B cell (primary cell): ENCODE measurements at regions of chr17 and their contacts with region 1.

Region 1: DNA sequence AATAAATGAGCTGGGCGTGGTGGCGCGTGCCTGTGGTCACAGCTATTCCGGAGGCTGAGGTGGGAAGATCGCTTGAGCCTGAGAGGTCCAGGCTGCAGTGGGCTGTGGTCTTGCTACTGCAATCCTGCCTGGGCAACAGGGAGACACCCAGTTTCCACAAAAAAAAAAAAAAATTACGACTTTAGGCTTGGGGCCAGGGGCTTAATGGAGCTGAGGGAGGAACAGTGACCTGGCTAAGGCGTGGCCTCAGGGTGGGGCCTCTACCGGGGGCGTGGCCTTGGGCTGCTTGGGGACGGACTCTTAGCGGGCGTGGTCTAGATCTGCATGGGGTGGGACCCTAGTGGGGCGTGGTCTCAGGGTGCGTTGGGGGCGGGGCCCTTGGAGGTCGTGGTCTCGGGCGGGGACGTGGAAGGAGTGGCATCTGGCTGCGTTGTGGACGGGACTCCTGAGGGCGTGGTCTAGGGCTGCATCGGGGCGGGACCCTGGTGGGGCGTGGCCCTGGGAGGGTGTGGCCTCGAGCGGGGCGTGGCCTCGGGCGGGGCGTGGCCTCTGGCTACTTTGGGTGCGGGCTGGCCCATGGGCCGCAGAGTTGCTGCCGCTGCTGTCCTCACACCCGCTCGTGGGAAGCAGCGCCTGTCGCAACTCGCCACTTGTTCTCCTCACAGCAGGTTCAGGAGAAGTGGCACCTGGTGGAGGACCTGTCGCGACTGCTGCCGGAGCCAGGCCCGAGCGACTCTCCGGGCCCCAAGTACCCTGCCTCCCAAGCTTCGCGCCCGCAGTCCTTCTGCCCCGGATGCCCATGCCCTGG is 5.8 kb upstream of the C17orf99 start:
- DNase-seq: peak; percentile 96
- ATAC-seq: peak; percentile 88
- H3K4me3 ChIP-seq: no peak overlapping the region
- H3K4me3 Mint-ChIP-seq: peak overlapping the region; percentile 46
- H3K27ac ChIP-seq: peak overlapping the region; percentile 43 to 51
- H3K27ac Mint-ChIP-seq: peak overlapping the region; percentile 73
- H3K4me1 ChIP-seq: peaks cover 71 to 94% of the 10 kb centered on the region in 2 donors
- H3K4me1 Mint-ChIP-seq: peaks cover 82% of the 10 kb centered on the region
- H3K27me3 ChIP-seq: no peaks in the 10 kb centered on the region
- H3K27me3 Mint-ChIP-seq: no peaks in the 10 kb centered on the region
- CTCF ChIP-seq: no peak

Region 2: GRCh38 chr17:78168242-78168902 is 28.0 kb after region 1 on chr17 and contains the start of gene SYNGR2:
- CTCF ChIA-PET with region 1: interaction called, 357 read pairs
- POLR2A ChIA-PET with region 1: interaction called, 432 read pairs
- intact Hi-C with region 1: loop called (anchors 1 kb)
- DNase-seq: peak; percentile 91
- ATAC-seq: peak; percentile 71
- H3K4me3 ChIP-seq: peak within 1 kb of the TSS; percentile 1 to 88 (median 74)
- H3K4me3 Mint-ChIP-seq: peak within 1 kb of the TSS; percentile 83
- H3K27ac ChIP-seq: peak within 1 kb of the TSS; percentile 93 to 97
- H3K27ac Mint-ChIP-seq: peak within 1 kb of the TSS; percentile 90
- H3K4me1 ChIP-seq: peaks cover 46 to 58% of the 10 kb centered on the region in 2 donors
- H3K4me1 Mint-ChIP-seq: peaks cover 51% of the 10 kb centered on the region
- H3K27me3 ChIP-seq: no peaks in the 10 kb centered on the region
- H3K27me3 Mint-ChIP-seq: no peaks in the 10 kb centered on the region
- CTCF ChIP-seq: no peak
- total RNA-seq, gene SYNGR2: 380 and 390 TPM in 2 replicates

Region 3: DNA sequence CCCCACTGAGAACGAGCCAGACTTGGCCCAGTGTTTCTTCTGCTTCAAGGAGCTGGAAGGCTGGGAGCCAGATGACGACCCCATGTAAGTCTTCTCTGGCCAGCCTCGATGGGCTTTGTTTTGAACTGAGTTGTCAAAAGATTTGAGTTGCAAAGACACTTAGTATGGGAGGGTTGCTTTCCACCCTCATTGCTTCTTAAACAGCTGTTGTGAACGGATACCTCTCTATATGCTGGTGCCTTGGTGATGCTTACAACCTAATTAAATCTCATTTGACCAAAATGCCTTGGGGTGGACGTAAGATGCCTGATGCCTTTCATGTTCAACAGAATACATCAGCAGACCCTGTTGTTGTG is 74.3 kb after region 1 on chr17:
- CTCF ChIA-PET with region 1: no interaction called
- POLR2A ChIA-PET with region 1: no interaction called
- intact Hi-C with region 1: loop called (anchors 1 kb)
- DNase-seq: no peak
- ATAC-seq: no peak
- H3K4me3 ChIP-seq: peak overlapping the region in 2 of 5 experiments; percentile 43 to 60
- H3K4me3 Mint-ChIP-seq: peak overlapping the region; percentile 79
- H3K27ac ChIP-seq: no peak overlapping the region
- H3K27ac Mint-ChIP-seq: peak overlapping the region; percentile 26
- H3K4me1 ChIP-seq: peaks cover 4 to 8% of the 10 kb centered on the region in 2 donors
- H3K4me1 Mint-ChIP-seq: peaks cover 7% of the 10 kb centered on the region
- H3K27me3 ChIP-seq: no peaks in the 10 kb centered on the region
- H3K27me3 Mint-ChIP-seq: no peaks in the 10 kb centered on the region
- CTCF ChIP-seq: no peak